ENCODE measurements at regions of chr2 and their contacts with region 1.

Region 1: GRCh38 chr2:120669121-120669952 is 66.3 kb upstream of the GLI2 start:
- DNase-seq: no peak
- CTCF ChIP-seq: no peak

Region 2: DNA sequence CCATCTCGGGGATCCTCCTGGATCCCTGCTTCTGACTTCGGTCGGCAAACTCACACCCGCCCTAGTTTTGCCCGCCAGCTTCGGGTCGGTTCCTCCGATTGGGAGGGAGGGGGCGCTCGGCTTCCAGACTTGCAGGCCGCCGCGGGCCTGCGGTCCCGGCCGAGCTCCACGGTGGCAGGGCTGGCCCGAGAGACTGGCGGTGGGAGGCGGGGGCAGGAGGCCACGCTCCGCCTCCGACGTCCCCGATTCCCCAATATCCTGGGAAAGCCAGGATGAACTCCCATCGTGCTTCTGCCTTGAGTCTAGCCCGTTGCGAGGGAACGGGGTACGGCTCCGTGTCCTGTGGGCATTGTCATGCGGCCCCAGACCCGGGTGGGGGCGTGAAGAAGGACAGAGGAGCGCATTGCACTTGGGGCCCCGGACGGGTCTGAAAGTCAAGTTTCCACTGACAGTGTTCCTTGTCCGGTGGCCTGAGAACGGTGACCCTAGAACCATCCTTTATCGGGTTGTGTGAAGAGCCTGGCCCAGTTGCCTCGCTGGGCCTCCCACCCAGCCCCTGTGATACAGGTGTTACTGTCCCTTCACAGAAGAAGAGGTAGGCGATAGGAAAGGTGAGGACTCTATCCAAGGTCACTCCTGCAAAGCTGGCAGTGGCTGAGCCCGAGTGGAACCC is 325.8 kb before region 1 on chr2:
- in situ Hi-C with region 1: loop called (anchors 25 kb)
- DNase-seq: peak; percentile 86
- CTCF ChIP-seq: peak; percentile 79

Measured in GM13977 (cell line).